Prostate gland (tissue), 2 donors: ENCODE measurements at regions of chr17 and their contacts with region 1.

Region 1: GRCh38 chr17:35119368-35120165 is at the start of gene RAD51D:
- DNase-seq: peak; percentile 42
- H3K4me3 ChIP-seq: peak within 1 kb of the TSS; percentile 57 to 64
- H3K27ac ChIP-seq: peak within 1 kb of the TSS; percentile 53 to 61
- H3K4me1 ChIP-seq: no peaks in the 10 kb centered on the region
- H3K27me3 ChIP-seq: no peaks in the 10 kb centered on the region
- CTCF ChIP-seq: peak; percentile 94 to 99 (median 96)
- POLR2A ChIP-seq: peak; percentile 18
- total RNA-seq, gene RAD51D: 9.9 to 12.0 TPM

Region 2: DNA sequence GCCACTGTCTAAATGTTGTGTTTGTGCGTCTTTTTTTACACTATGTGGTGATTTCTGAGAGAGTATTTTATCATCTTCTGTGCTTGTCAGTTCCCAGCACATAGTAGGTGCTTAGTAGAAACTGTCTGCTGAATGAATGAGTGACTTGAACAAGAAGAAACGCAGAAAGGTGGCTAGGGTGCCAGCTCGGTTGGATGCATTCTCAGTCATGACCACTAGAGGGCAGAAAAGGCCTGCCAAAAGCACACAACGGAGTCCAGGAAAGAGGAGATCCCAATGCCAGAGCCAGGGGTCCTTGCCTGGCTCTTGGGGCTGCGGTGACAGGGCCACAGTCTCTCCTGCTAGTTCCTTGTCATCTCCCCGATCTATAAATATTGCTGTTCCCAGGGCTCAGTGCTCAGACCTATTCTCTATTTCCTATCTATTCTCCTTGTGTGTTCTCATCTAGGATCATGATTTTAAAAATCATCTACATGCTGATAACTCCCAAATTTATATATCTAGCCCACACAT is 699.3 kb before region 1 on chr17:
- intact Hi-C with region 1: loop called (anchors 5 kb)
- DNase-seq: peak; percentile 57
- H3K4me3 ChIP-seq: no peak overlapping the region
- H3K27ac ChIP-seq: no peak overlapping the region
- H3K4me1 ChIP-seq: no peaks in the 10 kb centered on the region
- H3K27me3 ChIP-seq: peaks cover 29% of the 10 kb centered on the region
- CTCF ChIP-seq: peak; percentile 77 to 91 (median 90)
- POLR2A ChIP-seq: no peak

Region 3: DNA sequence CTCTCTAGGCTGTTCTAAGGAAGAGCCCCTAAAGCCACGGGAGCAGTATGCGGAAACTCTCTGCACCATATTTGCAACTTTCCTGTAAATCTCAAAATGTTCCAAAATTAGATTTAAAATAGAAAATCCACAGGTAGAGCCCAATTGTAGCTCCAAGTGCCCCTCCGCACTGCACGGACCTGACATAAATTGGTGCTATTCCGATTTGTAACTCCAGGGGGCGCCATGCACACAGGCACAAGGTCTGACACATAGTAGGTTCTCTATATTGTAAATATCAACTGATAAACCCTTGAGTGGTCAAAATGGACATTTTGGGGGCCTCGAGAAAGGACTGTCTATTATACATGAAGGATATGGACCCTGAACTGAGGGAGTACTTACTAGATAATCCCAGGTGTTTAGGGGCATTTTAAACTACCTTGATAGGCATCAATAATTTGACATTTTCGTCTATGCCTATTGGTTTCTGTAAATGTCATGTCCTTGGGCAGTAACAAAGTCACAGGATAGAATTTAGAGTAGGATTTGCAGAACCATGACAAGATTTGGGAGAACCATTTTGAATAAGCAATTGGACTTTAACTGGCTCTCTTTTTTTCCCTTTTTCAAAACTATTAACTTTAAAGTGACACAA is 576.7 kb before region 1 on chr17:
- intact Hi-C with region 1: loop called (anchors 5 kb)
- DNase-seq: peak; percentile 13
- H3K4me3 ChIP-seq: no peak overlapping the region
- H3K27ac ChIP-seq: no peak overlapping the region
- H3K4me1 ChIP-seq: no peaks in the 10 kb centered on the region
- H3K27me3 ChIP-seq: peaks cover 3% of the 10 kb centered on the region
- CTCF ChIP-seq: peak; percentile 62 to 79 (median 72)
- POLR2A ChIP-seq: no peak

Region 4: DNA sequence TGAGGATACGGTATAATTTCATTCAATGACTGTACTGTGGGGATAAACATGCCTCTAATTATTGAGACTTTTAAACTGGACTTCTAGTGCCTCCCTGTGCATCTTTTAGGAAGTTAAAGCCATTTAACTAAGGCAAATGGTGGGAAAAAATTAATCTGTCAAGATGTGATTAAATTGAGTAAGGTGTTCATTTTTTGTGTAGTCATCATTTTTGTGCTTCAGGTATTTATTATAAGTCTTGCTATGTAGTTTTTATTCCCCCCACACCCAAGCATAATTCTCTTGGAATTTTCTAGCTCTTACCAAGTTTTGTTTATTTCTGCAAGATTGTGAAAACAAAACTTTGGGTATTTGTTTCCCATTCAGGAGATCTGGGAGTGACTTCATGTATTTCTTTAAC is 699.9 kb after region 1 on chr17:
- intact Hi-C with region 1: no loop called
- DNase-seq: no peak
- H3K4me3 ChIP-seq: no peak overlapping the region
- H3K27ac ChIP-seq: peak overlapping the region in 1 of 2 donors; percentile 60
- H3K4me1 ChIP-seq: peaks cover 5% of the 10 kb centered on the region
- H3K27me3 ChIP-seq: no peaks in the 10 kb centered on the region
- CTCF ChIP-seq: no peak
- POLR2A ChIP-seq: no peak